BJ (cell line): ENCODE measurements at regions of chr1 and their contacts with region 1.

Region 1: DNA sequence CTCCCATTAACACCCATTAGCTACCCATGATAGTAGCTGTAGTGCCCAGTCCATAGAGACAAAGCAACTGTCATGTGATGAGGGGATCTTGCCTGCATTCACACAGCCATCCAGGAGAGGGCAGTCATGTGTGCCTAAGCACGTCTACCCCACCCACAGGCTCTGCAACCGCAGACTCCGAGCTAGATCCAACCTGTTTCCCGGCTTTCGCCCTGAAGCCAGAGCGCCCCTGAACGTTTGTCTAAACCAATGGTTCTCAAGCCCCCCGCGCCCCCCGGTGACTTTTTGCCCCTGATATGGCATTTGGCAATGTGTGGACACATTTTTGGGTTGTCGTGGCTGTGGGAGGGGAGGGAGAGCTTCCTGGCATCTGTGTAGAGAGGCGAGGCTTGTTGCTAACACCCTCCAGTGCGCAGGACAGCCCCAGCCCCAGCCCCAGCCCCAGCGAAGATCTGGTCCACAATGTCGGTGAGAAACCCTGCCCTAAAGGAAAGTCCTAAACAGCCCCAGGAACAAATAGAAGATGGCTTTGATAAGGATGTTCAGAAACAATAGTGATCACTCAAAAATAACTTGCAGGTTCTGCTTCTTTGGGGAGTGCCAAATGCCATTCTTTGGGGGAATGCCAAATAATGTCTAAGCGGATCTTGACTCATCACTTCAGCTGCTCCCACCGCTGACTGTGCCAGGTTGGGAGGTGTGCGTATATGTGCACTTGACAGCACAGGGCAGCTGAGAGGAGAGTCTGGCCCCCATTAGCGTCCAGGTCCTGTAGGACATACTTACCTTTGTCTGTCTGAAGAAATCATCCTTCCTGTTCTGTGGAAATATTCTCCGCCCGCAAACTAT is 34.5 kb downstream of the SLC44A3 start:
- DNase-seq: no peak
- H3K4me3 ChIP-seq: peak overlapping the region; percentile 40
- H3K27me3 ChIP-seq: no peaks in the 10 kb centered on the region; the same call in 1 of the 2 replicates
- CTCF ChIP-seq: peak; percentile 92

Region 2: DNA sequence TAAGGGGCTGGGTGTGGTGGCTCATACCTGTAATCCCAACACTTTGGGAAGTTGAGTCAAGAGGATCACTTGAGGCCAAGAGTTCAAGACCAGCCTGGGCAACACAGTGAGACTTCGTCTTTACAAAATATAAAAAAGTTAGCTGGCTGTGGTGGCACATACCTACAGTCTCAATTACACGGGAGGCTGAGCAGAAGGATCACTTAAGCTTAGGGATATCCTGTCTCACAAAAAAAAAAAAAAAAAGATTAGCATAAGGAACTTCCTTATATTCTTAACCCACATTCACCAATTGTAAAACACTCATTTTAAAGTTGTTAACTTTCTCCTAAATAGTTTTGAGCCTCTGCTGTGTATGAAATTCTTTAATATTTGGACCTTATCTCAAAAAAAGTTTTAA is 383.4 kb before region 1 on chr1:
- CTCF ChIA-PET with region 1: no interaction called
- POLR2A ChIA-PET with region 1: no interaction called
- DNase-seq: no peak
- H3K4me3 ChIP-seq: no peak overlapping the region
- H3K27me3 ChIP-seq: no peaks in the 10 kb centered on the region
- CTCF ChIP-seq: no peak

Region 3: DNA sequence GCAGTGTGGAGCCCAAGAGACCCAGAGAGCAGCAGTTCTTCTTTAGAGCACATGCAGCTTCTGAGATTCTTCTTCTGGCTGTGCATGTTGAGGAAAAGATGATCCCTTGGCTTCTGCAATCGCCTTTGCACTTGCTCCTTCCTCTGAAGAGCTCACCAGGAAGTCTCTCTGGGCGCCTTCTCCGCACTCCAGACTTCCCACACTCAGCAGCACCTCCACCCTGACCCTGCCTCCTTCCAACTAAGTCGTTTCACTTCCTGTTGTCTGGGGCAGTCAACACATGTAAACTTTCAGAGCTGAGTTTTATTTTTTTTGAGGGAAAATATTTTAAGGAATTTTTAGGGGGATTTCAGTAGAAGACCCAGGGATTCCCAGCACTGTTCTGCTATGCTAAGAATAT is 239.7 kb before region 1 on chr1:
- CTCF ChIA-PET with region 1: no interaction called
- POLR2A ChIA-PET with region 1: no interaction called
- DNase-seq: no peak
- H3K4me3 ChIP-seq: no peak overlapping the region
- H3K27me3 ChIP-seq: no peaks in the 10 kb centered on the region
- CTCF ChIP-seq: no peak

Region 4: DNA sequence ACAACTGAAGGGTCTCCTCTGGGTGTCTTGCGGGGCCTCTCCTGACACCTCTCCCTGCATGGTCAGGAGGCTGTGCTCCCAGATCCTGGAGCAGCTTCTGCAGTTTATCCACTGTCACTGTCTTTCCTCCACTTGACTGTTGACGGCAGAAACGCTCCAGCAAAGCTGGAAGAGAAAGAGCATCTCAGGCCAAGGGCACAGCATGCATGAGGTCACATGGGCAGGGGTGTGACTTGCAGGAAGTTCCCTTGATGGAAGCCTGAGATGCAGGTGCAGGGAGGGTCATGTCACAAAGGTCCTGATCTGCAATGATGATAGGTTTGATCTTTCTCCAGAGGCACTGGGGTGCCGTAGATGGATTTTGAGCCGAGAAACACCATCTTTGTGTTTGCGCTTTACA is 11.3 kb before region 1 on chr1:
- CTCF ChIA-PET with region 1: interaction called, 36 read pairs
- POLR2A ChIA-PET with region 1: no interaction called
- DNase-seq: no peak
- H3K4me3 ChIP-seq: no peak overlapping the region
- H3K27me3 ChIP-seq: peaks cover 7% of the 10 kb centered on the region
- CTCF ChIP-seq: no peak

Region 5: GRCh38 chr1:94884106-94884505 is 29.4 kb after region 1 on chr1:
- CTCF ChIA-PET with region 1: interaction called, 12 read pairs
- POLR2A ChIA-PET with region 1: no interaction called
- DNase-seq: no peak
- H3K4me3 ChIP-seq: no peak overlapping the region
- H3K27me3 ChIP-seq: no peaks in the 10 kb centered on the region
- CTCF ChIP-seq: no peak

Region 6: GRCh38 chr1:94920051-94920450 is 65.4 kb after region 1 on chr1:
- CTCF ChIA-PET with region 1: interaction called, 30 read pairs
- POLR2A ChIA-PET with region 1: interaction called, 5 read pairs
- DNase-seq: no peak
- H3K4me3 ChIP-seq: no peak overlapping the region
- H3K27me3 ChIP-seq: no peaks in the 10 kb centered on the region
- CTCF ChIP-seq: no peak

Region 7: GRCh38 chr1:95002540-95003432 is 148.1 kb after region 1 on chr1:
- CTCF ChIA-PET with region 1: interaction called, 12 read pairs
- POLR2A ChIA-PET with region 1: no interaction called
- DNase-seq: no peak
- H3K4me3 ChIP-seq: no peak overlapping the region
- H3K27me3 ChIP-seq: no peaks in the 10 kb centered on the region
- CTCF ChIP-seq: no peak

Region 8: DNA sequence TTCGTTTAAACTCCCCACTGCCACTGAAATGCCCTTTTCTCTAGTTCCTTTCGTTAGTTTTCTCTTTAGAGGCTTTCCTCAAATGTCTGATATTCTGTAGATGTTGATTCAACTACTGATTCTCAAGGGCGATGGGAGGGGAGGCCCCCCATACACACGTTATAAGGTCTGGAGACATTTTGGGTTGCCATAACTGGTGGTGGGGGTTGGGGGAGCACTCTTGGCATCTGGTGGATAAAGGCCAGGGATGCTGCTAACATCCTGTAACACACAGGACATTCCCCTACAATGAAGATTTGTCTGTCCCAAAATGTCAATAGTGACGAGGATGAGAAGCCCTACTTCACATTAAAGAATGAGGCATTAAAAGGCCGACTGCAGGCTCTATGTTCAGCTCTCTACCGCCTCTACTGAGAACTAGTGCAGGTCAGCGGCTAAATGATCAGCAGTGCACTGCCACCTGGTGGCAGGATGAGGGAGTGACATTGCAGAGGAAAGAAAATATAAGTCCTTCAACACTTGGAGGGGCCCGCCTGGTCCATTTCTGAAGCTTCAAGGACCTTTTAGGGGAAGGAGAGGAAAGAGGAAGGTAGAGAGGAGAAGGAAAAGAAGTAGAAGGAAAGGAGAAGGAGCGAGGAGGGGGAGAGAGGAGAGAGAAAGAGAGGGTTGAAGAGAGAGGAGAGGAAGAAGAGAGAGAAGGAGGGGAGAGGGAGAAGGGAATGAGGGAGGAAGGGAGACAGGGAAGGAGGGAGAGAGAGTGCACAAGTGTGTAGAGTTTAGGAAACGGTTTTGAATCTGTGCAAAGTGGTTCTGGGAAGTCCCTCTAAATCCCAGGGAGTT is 188.7 kb after region 1 on chr1:
- CTCF ChIA-PET with region 1: interaction called, 116 read pairs
- POLR2A ChIA-PET with region 1: interaction called, 5 read pairs
- DNase-seq: no peak
- H3K4me3 ChIP-seq: no peak overlapping the region
- H3K27me3 ChIP-seq: no peaks in the 10 kb centered on the region
- CTCF ChIP-seq: peak; percentile 97

Region 9: DNA sequence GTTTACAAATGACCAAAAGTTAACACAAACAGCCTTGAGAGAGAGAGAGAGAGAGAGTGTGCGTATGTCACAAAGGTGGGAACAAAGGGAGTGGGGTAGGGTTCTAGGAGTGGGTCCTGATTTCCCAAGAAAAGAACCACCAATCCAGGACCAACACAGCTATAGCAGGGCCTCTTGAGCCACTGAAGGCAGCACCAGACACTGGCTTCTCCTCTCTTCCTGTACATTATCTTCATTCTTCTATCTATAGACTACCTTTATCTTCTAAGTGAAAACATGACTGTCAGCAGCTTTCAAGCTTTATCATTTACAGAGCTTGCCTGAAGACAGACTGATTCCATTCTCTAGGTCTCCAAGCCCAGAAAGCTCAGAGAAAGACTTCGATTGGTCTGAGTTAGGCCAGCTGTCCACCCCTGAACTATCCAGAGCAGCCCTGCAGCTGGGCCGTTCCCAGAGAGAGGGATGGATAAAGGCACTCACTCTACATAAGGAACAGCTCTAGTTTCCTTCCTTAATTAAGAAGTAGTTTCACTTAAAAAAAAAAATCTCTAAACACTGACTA is 206.8 kb after region 1 on chr1:
- CTCF ChIA-PET with region 1: no interaction called
- POLR2A ChIA-PET with region 1: no interaction called
- DNase-seq: no peak
- H3K4me3 ChIP-seq: no peak overlapping the region
- H3K27me3 ChIP-seq: no peaks in the 10 kb centered on the region
- CTCF ChIP-seq: no peak